B cell (primary cell): ENCODE measurements at regions of chr1 and their contacts with region 1.

Region 1: GRCh38 chr1:27634177-27634984 is 604 bp downstream of the FGR start:
- DNase-seq: peak; percentile 74
- ATAC-seq: peak; percentile 12
- H3K4me3 ChIP-seq: peak overlapping the region; percentile 68 to 78 (median 72)
- H3K4me3 Mint-ChIP-seq: peak overlapping the region; percentile 88
- H3K27ac ChIP-seq: peak overlapping the region; percentile 90
- H3K27ac Mint-ChIP-seq: peak overlapping the region; percentile 94
- H3K4me1 ChIP-seq: peaks cover 71 to 96% of the 10 kb centered on the region in 2 donors
- H3K4me1 Mint-ChIP-seq: peaks cover 81% of the 10 kb centered on the region
- H3K27me3 ChIP-seq: no peaks in the 10 kb centered on the region
- H3K27me3 Mint-ChIP-seq: no peaks in the 10 kb centered on the region
- CTCF ChIP-seq: no peak

Region 2: DNA sequence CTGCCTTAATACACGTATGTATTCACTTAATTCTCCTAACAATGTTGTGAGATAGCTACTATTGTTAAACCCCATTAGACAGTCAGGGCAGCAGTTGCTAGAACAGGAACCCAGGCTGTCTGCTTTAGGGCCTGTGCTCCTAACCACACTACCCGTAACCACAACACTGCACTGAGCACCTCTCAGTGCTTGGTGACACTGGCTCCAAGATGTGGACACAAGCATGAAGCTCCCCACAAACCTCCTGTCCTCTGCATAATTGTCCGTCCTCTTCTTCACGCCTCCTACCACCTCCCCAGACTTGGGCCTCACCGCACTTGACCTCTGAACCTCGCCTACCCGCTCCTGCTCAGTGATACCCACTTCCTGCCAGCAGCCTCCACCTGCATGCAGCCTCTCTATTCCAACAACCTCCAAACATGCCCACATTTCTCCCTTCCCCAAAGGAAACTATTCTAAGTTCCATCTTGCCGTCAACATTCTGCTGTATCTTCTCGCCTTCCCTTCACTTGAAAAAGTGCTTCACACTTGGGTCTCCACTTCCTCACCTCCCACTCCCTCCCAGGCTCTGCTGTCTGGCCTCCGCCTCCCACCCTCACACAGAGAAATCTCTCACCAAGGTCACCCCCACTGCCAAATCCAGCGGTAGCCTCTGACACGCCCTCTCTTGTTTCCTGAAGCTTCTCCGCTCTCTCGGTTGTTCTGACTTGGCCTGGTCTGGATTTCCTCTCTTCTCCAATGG is 15.9 kb before region 1 on chr1:
- CTCF ChIA-PET with region 1: interaction called, 10 read pairs
- POLR2A ChIA-PET with region 1: interaction called, 4 read pairs
- intact Hi-C with region 1: no loop called
- DNase-seq: no peak
- ATAC-seq: peak; percentile 82
- H3K4me3 ChIP-seq: no peak overlapping the region
- H3K4me3 Mint-ChIP-seq: peak overlapping the region; percentile 23
- H3K27ac ChIP-seq: peak overlapping the region; percentile 39 to 55
- H3K27ac Mint-ChIP-seq: peak overlapping the region; percentile 83
- H3K4me1 ChIP-seq: peaks cover 32 to 61% of the 10 kb centered on the region in 2 donors
- H3K4me1 Mint-ChIP-seq: peaks cover 43% of the 10 kb centered on the region
- H3K27me3 ChIP-seq: no peaks in the 10 kb centered on the region
- H3K27me3 Mint-ChIP-seq: no peaks in the 10 kb centered on the region
- CTCF ChIP-seq: no peak

Region 3: GRCh38 chr1:27858072-27858958 is 223.9 kb after region 1 on chr1:
- CTCF ChIA-PET with region 1: no interaction called
- POLR2A ChIA-PET with region 1: no interaction called
- intact Hi-C with region 1: no loop called
- DNase-seq: peak; percentile 88
- ATAC-seq: peak; percentile 95
- H3K4me3 ChIP-seq: no peak overlapping the region
- H3K4me3 Mint-ChIP-seq: no peak overlapping the region
- H3K27ac ChIP-seq: no peak overlapping the region
- H3K27ac Mint-ChIP-seq: peak overlapping the region; percentile 79
- H3K4me1 ChIP-seq: peaks cover 20 to 22% of the 10 kb centered on the region in 2 donors
- H3K4me1 Mint-ChIP-seq: peaks cover 27% of the 10 kb centered on the region
- H3K27me3 ChIP-seq: peaks cover 0 to 3% (median 0%) of the 10 kb centered on the region in 4 experiments
- H3K27me3 Mint-ChIP-seq: no peaks in the 10 kb centered on the region
- CTCF ChIP-seq: peak; percentile 97